GM10248 (cell line): ENCODE measurements at regions of chr17 and their contacts with region 1.

Region 1: DNA sequence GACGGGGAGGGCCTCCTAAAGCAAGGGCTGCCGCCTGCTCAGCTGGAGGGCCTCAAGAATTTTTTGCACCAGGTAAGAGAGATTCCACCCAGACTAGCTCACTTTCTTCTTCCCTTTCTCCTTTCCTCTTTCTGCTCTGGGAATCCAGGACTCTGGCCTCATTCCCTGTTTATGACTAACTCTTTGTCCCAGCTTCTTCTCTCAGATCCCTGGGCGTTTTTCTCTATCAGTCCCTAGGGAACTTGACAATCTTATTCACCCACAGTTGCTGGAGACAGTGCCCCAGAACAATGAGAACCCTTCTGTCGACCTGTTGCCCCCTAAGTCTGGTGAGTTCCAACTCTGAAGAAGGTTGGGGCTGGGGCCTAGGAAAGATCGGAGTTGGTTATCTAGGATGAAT is 15.6 kb downstream of the CNTROB start:
- DNase-seq: no peak
- CTCF ChIP-seq: no peak

Region 2: DNA sequence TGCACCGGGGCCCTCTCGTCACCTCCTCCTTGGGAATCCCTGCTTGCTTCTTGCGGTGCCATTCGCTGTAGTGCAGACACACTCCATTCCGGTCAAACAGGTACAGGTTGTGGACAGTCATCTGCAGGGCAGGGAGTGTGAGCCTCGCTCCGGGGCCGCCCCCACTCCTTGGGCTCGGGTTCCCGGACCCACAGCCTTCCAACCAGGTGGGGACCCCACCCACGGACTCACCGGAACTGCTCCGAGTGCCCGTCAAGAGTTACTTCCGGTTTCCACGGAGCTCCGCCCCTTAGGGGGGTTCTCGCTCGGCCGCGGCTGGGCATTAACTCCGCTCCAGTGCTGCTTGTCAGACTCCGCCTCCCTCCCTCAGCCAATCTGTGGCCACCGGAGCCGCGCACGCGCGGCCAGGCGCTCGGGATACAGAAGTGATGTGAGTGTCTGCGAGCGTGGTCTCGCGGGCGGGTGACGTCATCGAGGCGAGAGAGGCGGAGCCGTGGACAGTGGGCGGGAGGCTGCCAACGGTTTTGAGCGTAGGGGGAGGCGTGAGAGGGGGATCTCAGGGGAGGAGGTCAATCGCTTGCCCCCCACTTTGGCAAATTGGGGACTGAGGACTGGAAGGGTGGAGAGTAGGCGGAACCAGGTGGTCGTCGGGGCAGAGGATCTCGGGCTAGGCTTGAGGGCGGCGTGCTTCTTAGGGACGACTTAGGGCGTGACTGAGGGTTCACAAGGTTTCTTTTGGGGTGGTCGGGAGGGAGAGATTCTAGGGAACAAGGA is 15.8 kb before region 1 on chr17 and contains the starts of genes CNTROB and TRAPPC1:
- CTCF ChIA-PET with region 1: interaction called, 12 read pairs
- POLR2A ChIA-PET with region 1: interaction called, 5 read pairs
- DNase-seq: peak; percentile 100
- CTCF ChIP-seq: no peak

Region 3: GRCh38 chr17:8044819-8045810 is 97.5 kb after region 1 on chr17:
- CTCF ChIA-PET with region 1: no interaction called
- POLR2A ChIA-PET with region 1: no interaction called
- DNase-seq: no peak
- CTCF ChIP-seq: no peak